ENCODE measurements at regions of chr10 and their contacts with region 1.

Region 1: GRCh38 chr10:104892879-104893617 is 252.0 kb downstream of the SORCS3 start:
- DNase-seq: no peak
- ATAC-seq: peak; percentile 78
- H3K4me3 ChIP-seq: no peak overlapping the region
- H3K27ac ChIP-seq: no peak overlapping the region
- H3K4me1 ChIP-seq: no peaks in the 10 kb centered on the region
- H3K27me3 ChIP-seq: no peaks in the 10 kb centered on the region; a peak in 1 of 4 replicates
- CTCF ChIP-seq: no peak
- EP300 ChIP-seq: peak in 1 of 2 experiments; percentile 30; a peak in 1 of 4 replicates
- POLR2A ChIP-seq: no peak
- RAD21 ChIP-seq: no peak

Region 2: DNA sequence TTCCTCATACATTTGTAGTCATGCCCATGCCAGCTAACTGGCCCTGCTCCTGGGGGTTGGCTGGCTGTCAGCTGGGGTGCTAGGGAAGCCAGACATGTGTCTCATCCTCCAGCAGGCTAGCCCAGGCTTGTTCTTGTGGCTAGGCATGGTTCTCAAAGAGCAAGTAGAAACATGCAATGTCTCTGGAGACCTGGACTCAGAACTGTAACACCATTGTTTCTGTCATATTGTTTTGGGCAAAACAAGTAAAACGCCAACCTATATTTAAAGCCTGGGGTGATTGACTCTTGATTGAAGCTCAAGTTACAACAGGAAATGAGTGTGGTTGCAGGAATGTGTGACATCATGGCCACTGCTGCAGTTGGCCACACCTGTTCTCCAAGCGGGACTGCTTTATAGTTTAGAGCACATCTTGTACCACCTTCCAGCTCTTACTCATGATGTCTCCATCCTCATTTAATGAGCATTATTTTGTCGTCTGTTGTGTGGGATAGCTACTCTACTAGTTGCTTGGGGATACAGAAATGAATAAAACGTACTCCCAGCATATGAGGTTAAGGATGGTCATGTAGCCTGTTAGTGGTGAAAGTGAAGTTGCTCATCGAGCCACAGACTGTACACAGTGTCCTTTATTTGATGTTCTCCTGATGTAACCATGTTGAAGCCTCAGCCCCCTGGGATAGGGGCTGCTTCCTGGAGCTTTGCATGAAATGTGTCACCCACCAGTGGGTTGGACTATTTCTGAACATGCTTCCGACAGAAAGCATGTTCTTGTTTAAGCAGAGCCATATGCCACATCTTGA is 83.6 kb before region 1 on chr10:
- CTCF ChIA-PET with region 1: no interaction called
- POLR2A ChIA-PET with region 1: no interaction called
- RAD21 ChIA-PET with region 1: no interaction called
- SMC1A ChIA-PET with region 1: interaction called, 3 read pairs
- in situ Hi-C with region 1: no loop called
- intact Hi-C with region 1: loop called (anchors 1 kb)
- DNase-seq: no peak
- ATAC-seq: peak; percentile 88
- H3K4me3 ChIP-seq: no peak overlapping the region
- H3K27ac ChIP-seq: no peak overlapping the region
- H3K4me1 ChIP-seq: peaks cover 2% of the 10 kb centered on the region
- H3K27me3 ChIP-seq: no peaks in the 10 kb centered on the region
- CTCF ChIP-seq: no peak
- EP300 ChIP-seq: no peak
- POLR2A ChIP-seq: no peak
- RAD21 ChIP-seq: no peak

Region 3: DNA sequence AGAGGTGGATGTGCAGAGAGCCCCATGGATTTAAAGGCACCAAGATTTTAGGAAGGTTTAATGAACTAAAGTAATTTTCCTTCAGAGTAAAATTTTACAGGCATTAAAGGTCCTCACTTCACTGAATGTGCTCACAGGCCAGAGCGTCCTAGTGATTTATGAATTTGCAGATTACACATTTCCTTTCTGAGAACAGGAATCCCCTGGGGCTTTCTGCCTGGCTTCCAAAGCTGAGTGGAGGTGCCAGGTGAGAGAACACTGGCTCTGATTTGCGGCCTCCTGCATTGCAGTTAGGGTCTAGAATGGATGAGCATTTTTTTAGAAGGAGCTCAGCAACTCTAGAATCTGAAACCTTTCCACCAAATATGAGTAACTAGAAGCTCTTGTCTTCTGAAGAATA is 57.6 kb before region 1 on chr10:
- CTCF ChIA-PET with region 1: no interaction called
- POLR2A ChIA-PET with region 1: no interaction called
- RAD21 ChIA-PET with region 1: interaction called, 3 read pairs
- SMC1A ChIA-PET with region 1: no interaction called
- in situ Hi-C with region 1: no loop called
- intact Hi-C with region 1: loop called (anchors 1 kb)
- DNase-seq: no peak
- ATAC-seq: peak; percentile 70
- H3K4me3 ChIP-seq: no peak overlapping the region
- H3K27ac ChIP-seq: no peak overlapping the region
- H3K4me1 ChIP-seq: no peaks in the 10 kb centered on the region
- H3K27me3 ChIP-seq: no peaks in the 10 kb centered on the region
- CTCF ChIP-seq: no peak
- EP300 ChIP-seq: no peak
- POLR2A ChIP-seq: no peak
- RAD21 ChIP-seq: no peak

Region 4: DNA sequence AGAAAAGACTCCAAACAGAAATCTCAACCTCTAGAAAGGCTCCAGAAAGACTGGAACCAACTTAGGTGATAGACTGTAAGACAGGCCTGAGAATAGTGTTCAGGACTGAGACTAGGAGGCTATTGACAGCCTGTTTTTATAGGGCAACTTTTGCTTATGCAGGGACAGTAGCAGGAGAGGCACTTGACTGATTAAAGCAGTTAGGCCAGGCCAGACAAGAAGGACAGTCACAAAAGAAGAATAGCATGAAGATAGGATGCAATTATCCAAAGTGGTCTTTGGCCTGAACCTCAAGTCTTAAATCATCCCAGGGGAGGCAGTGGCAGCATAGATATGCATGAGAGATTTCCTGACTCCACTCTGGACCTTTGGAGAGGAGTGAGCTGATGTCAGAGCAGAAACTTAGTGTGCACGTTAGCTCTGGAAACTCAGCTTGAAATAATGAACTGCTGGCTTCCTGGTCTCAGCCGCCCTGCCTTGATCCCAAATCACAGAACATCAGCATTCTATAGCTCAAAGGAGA is 38.6 kb after region 1 on chr10:
- CTCF ChIA-PET with region 1: no interaction called
- POLR2A ChIA-PET with region 1: no interaction called
- RAD21 ChIA-PET with region 1: no interaction called
- SMC1A ChIA-PET with region 1: no interaction called
- in situ Hi-C with region 1: no loop called
- intact Hi-C with region 1: no loop called
- DNase-seq: no peak
- ATAC-seq: no peak
- H3K4me3 ChIP-seq: no peak overlapping the region
- H3K27ac ChIP-seq: no peak overlapping the region
- H3K4me1 ChIP-seq: no peaks in the 10 kb centered on the region
- H3K27me3 ChIP-seq: no peaks in the 10 kb centered on the region
- CTCF ChIP-seq: no peak
- EP300 ChIP-seq: no peak
- POLR2A ChIP-seq: no peak
- RAD21 ChIP-seq: no peak